ENCODE measurements at regions of chr18 and their contacts with region 1.

Region 1: GRCh38 chr18:35580701-35581539 is 620 bp upstream of the GALNT1 start:
- DNase-seq: peak; percentile 55 to 84 (median 65)
- ATAC-seq: peak; percentile 60 to 87 (median 84)
- H3K4me3 ChIP-seq: peak overlapping the region; percentile 65 to 96 (median 79)
- H3K27ac ChIP-seq: peak overlapping the region; percentile 90 to 99 (median 96)
- H3K4me1 ChIP-seq: peaks cover 0 to 32% (median 21%) of the 10 kb centered on the region in 12 donors
- H3K27me3 ChIP-seq: no peaks in the 10 kb centered on the region
- CTCF ChIP-seq: no peak
- POLR2A ChIP-seq: peak in 1 of 2 donors; percentile 16

Region 2: DNA sequence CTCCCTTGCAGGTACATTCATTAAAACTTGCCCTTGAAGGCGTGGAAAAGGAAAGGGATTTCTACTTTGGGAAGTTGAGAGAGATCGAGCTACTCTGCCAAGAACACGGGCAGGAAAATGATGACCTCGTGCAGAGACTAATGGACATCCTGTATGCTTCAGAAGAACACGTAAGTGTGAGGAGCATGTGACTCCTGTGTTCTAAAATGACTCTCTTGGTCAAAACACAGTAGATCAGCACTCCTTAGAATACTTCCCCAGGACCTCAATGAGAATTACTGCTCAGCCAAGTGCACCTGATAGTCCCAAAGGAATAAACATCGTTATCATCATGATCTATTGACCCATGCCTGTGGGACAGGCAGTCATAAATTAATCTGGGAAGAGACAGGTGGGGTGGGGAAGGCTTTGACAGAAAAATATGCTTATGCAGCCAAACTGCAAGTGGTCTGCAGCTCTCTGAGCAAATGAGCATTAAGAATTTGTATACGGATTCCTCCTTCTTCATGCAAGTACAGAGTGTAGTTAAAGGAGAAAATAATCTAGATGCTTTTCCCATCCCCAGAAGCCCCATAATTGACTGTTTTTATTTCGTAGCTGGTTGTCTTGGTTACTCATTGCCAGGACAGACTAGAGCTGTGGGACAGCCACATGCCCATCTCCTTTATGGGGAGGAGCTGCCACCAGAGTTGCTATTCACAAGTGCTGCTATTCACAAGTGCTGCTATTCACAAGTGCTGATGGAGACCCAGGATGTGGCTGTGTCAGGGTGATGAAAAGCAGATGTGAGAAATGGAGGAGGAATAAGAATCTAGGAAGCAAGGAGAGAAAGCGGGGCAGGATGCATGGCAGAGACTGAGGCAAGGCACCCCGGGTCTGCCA is 448.7 kb before region 1 on chr18:
- intact Hi-C with region 1: no loop called
- DNase-seq: no peak
- ATAC-seq: peak; percentile 39 to 75 (median 57)
- H3K4me3 ChIP-seq: no peak overlapping the region
- H3K27ac ChIP-seq: peak overlapping the region in 11 of 12 donors; percentile 8 to 77 (median 51)
- H3K4me1 ChIP-seq: peaks cover 0 to 66% (median 26%) of the 10 kb centered on the region in 12 donors
- H3K27me3 ChIP-seq: no peaks in the 10 kb centered on the region
- CTCF ChIP-seq: no peak
- POLR2A ChIP-seq: no peak

Region 3: GRCh38 chr18:35407871-35408481 is 172.9 kb before region 1 on chr18:
- intact Hi-C with region 1: loop called in 7 of 10 experiments (anchors 5 to 10 kb)
- DNase-seq: peak in 2 of 5 donors; percentile 47 to 49
- ATAC-seq: peak in 3 of 4 donors; percentile 80 to 88 (median 86)
- H3K4me3 ChIP-seq: no peak overlapping the region
- H3K27ac ChIP-seq: no peak overlapping the region
- H3K4me1 ChIP-seq: peaks cover 0 to 14% (median 1%) of the 10 kb centered on the region in 12 donors
- H3K27me3 ChIP-seq: no peaks in the 10 kb centered on the region
- CTCF ChIP-seq: peak; percentile 60 to 89 (median 82)
- POLR2A ChIP-seq: no peak

Region 4: DNA sequence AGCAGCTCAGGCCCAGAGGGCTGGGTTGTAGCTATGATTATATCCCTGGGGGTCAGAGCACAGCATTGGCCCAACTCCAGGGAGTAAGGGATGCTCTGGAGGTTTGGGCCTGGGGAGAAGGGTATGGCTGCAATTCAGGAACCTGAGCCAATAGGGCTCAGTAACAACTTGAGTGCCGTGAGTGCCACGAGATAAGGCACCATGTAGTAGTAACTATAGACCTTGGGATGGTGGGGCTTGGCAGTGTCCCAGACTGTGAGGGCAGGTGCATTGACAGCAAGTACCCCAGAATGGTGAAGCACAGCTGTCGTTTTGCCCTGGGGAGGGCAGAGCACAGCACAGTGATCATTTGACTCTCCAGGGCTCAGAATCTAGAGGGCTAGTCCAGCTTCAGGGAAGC is 158.7 kb before region 1 on chr18:
- intact Hi-C with region 1: loop called in 5 of 10 experiments (anchors 10 kb)
- DNase-seq: peak in 1 of 5 donors; percentile 34
- ATAC-seq: peak in 2 of 4 donors; percentile 20 to 67
- H3K4me3 ChIP-seq: no peak overlapping the region
- H3K27ac ChIP-seq: no peak overlapping the region
- H3K4me1 ChIP-seq: no peaks in the 10 kb centered on the region
- H3K27me3 ChIP-seq: no peaks in the 10 kb centered on the region
- CTCF ChIP-seq: no peak
- POLR2A ChIP-seq: no peak

Region 5: GRCh38 chr18:35513181-35513936 is 67.6 kb before region 1 on chr18:
- intact Hi-C with region 1: loop called in 3 of 10 experiments (anchors 5 to 10 kb)
- DNase-seq: peak in 4 of 5 donors; percentile 47 to 70 (median 65)
- ATAC-seq: peak; percentile 71 to 86 (median 80)
- H3K4me3 ChIP-seq: no peak overlapping the region
- H3K27ac ChIP-seq: peak overlapping the region in 7 of 12 donors; percentile 3 to 59 (median 29)
- H3K4me1 ChIP-seq: peaks cover 0 to 35% (median 14%) of the 10 kb centered on the region in 12 donors
- H3K27me3 ChIP-seq: no peaks in the 10 kb centered on the region
- CTCF ChIP-seq: no peak
- POLR2A ChIP-seq: no peak

Region 6: DNA sequence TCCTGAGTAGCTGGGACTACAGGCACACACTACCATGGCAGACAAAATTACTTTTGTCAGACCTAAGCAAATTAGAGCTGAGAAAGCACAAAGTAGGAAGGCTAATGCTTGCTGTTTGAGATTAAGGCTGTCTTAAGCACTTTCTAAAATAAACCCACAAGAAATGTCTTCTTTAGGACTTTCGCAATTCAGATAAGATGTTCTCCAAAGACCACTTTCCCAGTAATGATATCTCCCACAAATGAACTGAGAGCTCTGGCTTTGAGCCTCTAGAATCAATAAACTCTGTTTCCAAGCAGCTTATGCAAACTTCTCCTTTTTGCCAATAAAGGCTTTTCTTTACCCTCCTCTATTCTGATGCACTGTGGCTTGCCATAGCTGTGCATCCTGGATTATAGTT is 31.4 kb before region 1 on chr18:
- intact Hi-C with region 1: no loop called
- DNase-seq: no peak
- ATAC-seq: no peak
- H3K4me3 ChIP-seq: no peak overlapping the region
- H3K27ac ChIP-seq: no peak overlapping the region
- H3K4me1 ChIP-seq: no peaks in the 10 kb centered on the region
- H3K27me3 ChIP-seq: no peaks in the 10 kb centered on the region
- CTCF ChIP-seq: no peak
- POLR2A ChIP-seq: no peak

Region 7: GRCh38 chr18:35616664-35617423 is 35.9 kb after region 1 on chr18:
- intact Hi-C with region 1: loop called in 2 of 10 experiments (anchors 5 kb)
- DNase-seq: peak in 3 of 5 donors; percentile 16 to 39 (median 25)
- ATAC-seq: peak in 3 of 4 donors; percentile 49 to 66 (median 63)
- H3K4me3 ChIP-seq: no peak overlapping the region
- H3K27ac ChIP-seq: peak overlapping the region in 3 of 12 donors; percentile 14 to 44 (median 20)
- H3K4me1 ChIP-seq: peaks cover 4 to 62% (median 39%) of the 10 kb centered on the region in 12 donors
- H3K27me3 ChIP-seq: no peaks in the 10 kb centered on the region
- CTCF ChIP-seq: no peak
- POLR2A ChIP-seq: no peak

Region 8: GRCh38 chr18:35730691-35731370 is 149.9 kb after region 1 on chr18:
- intact Hi-C with region 1: loop called in 1 of 10 experiments (anchors 10 kb)
- DNase-seq: peak in 2 of 5 donors; percentile 32 to 43
- ATAC-seq: peak; percentile 52 to 81 (median 67)
- H3K4me3 ChIP-seq: peak overlapping the region in 2 of 12 donors; percentile 1 to 17
- H3K27ac ChIP-seq: peak overlapping the region in 2 of 12 donors; percentile 16 to 39
- H3K4me1 ChIP-seq: peaks cover 0 to 28% (median 17%) of the 10 kb centered on the region in 12 donors
- H3K27me3 ChIP-seq: no peaks in the 10 kb centered on the region
- CTCF ChIP-seq: no peak
- POLR2A ChIP-seq: no peak

Region 9: DNA sequence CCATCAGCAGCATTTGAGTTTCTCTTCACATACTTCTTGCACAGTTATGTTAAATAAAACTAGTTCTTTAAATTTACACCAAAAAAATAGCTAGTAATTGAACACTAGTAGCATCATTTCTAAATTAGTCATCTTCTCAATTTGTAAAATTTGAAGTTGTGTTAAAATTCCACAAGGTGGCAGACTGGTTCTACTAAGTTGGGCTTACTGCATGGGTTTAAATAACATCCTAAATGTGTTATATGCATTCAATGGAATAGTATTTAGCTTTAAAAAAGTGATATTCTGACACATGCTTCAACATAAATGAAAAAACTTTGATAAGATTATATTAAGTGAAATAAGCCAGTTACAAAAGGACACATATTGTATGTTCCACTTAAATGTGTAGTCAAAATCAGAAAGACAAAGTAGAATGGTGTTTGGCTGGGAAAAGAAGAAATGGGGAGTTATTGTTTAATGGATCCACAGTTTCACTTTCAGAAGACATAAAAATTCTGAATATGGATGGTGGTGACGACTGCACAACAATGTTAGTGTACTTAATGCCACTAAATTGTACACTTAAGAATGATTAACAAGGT is 515.1 kb after region 1 on chr18:
- intact Hi-C with region 1: no loop called
- DNase-seq: no peak
- ATAC-seq: peak in 1 of 4 donors; percentile 42
- H3K4me3 ChIP-seq: no peak overlapping the region
- H3K27ac ChIP-seq: no peak overlapping the region
- H3K4me1 ChIP-seq: no peaks in the 10 kb centered on the region
- H3K27me3 ChIP-seq: peaks cover 0 to 5% (median 0%) of the 10 kb centered on the region in 9 donors
- CTCF ChIP-seq: peak; percentile 34 to 77 (median 54)
- POLR2A ChIP-seq: no peak

Measured in heart left ventricle (tissue), 16 donors.